H1 (cell line): ENCODE measurements at regions of chr12 and their contacts with region 1.

Region 1: GRCh38 chr12:66107451-66107915 is 23.1 kb downstream of the LLPH start:
- DNase-seq: peak; percentile 33 to 70
- H3K4me3 ChIP-seq: no peak overlapping the region
- H3K27ac ChIP-seq: no peak overlapping the region
- H3K4me1 ChIP-seq: peaks cover 0 to 3% (median 0%) of the 10 kb centered on the region in 4 experiments; a peak in 1 of 7 replicates
- H3K27me3 ChIP-seq: peaks cover 0 to 1% (median 0%) of the 10 kb centered on the region in 4 experiments; a peak in 1 of 7 replicates
- CTCF ChIP-seq: peak in 2 of 3 experiments; percentile 61 to 73; a peak in 3 of 4 replicates
- EP300 ChIP-seq: no peak
- POLR2A ChIP-seq: no peak
- RAD21 ChIP-seq: peak; percentile 80 to 86

Region 2: GRCh38 chr12:65300680-65301349 is 806.7 kb before region 1 on chr12:
- CTCF ChIA-PET with region 1: interaction called, 11 read pairs
- POLR2A ChIA-PET with region 1: no interaction called
- DNase-seq: no peak
- H3K4me3 ChIP-seq: no peak overlapping the region
- H3K27ac ChIP-seq: no peak overlapping the region
- H3K4me1 ChIP-seq: no peaks in the 10 kb centered on the region
- H3K27me3 ChIP-seq: no peaks in the 10 kb centered on the region
- CTCF ChIP-seq: peak; percentile 63 to 75 (median 71)
- EP300 ChIP-seq: no peak
- POLR2A ChIP-seq: no peak
- RAD21 ChIP-seq: peak; percentile 46 to 60

Region 3: GRCh38 chr12:66119870-66120241 is 12.4 kb after region 1 on chr12:
- CTCF ChIA-PET with region 1: interaction called, 41 read pairs
- POLR2A ChIA-PET with region 1: no interaction called
- DNase-seq: no peak
- H3K4me3 ChIP-seq: no peak overlapping the region
- H3K27ac ChIP-seq: no peak overlapping the region
- H3K4me1 ChIP-seq: no peaks in the 10 kb centered on the region
- H3K27me3 ChIP-seq: no peaks in the 10 kb centered on the region
- CTCF ChIP-seq: no peak
- EP300 ChIP-seq: no peak
- POLR2A ChIP-seq: no peak
- RAD21 ChIP-seq: no peak

Region 4: DNA sequence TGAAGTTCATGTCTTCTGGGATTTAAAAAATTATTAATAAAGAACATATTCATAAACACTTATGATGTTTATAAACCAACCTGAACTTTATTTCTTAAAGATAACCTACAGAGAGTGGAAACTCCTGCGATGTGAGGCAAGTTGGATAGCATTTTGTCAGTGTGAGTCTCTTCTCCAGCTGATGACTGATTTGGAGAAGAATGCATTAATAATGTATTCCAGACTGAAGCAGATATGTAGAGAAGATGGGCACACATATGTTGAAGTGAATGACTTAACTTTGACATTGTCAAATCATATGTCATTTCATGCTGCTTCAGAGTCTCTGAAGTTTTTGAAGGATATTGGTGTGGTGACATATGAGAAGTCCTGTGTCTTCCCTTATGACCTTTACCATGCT is 202.1 kb after region 1 on chr12:
- CTCF ChIA-PET with region 1: no interaction called
- POLR2A ChIA-PET with region 1: no interaction called
- DNase-seq: no peak
- H3K4me3 ChIP-seq: no peak overlapping the region
- H3K27ac ChIP-seq: no peak overlapping the region
- H3K4me1 ChIP-seq: no peaks in the 10 kb centered on the region
- H3K27me3 ChIP-seq: no peaks in the 10 kb centered on the region
- CTCF ChIP-seq: no peak
- EP300 ChIP-seq: no peak
- POLR2A ChIP-seq: no peak
- RAD21 ChIP-seq: no peak